Activated CD8-positive, alpha-beta T cell treated with anti-CD3 and anti-CD28 coated beads, Interleukin-2, amount 10 ng/mL, durations not matched to agents 7 days and 5 days (primary cell): ENCODE measurements at regions of chr18 and their contacts with region 1.

Region 1: DNA sequence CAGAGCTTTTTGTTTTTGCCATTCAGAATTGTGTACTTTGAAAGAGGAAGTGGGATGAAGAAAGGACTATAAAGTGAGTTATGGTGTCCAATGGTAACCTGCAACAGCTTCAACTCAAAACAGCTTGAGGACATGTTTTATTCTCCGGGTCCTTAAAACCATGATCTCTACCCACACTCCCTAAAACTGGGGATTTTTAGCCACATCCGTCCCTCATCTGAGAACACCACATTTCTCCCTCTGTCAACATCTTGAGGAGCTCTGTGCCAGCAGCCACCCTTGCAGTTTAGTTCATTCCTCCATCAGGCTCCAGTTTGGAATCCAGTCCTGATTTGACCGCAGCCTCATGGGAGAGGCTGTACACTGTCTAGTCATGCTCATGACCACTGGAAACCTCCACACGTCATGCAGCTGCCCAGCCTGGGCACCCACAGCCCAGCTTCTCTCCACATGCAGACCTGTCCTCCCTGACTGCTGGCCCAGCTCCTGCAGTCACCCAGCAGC is 62.6 kb downstream of the C18orf63 start:
- DNase-seq: peak; percentile 69
- ATAC-seq: peak; percentile 51
- H3K4me3 Mint-ChIP-seq: peak overlapping the region; percentile 54
- H3K27ac Mint-ChIP-seq: peak overlapping the region; percentile 89
- H3K4me1 Mint-ChIP-seq: peaks cover 61% of the 10 kb centered on the region
- H3K27me3 Mint-ChIP-seq: no peaks in the 10 kb centered on the region

Region 2: GRCh38 chr18:74389171-74389927 is 11.1 kb after region 1 on chr18:
- CTCF ChIA-PET with region 1: interaction called, 13 read pairs
- POLR2A ChIA-PET with region 1: interaction called, 5 read pairs
- DNase-seq: no peak
- ATAC-seq: no peak
- H3K4me3 Mint-ChIP-seq: no peak overlapping the region
- H3K27ac Mint-ChIP-seq: no peak overlapping the region
- H3K4me1 Mint-ChIP-seq: peaks cover 21% of the 10 kb centered on the region
- H3K27me3 Mint-ChIP-seq: peaks cover 13% of the 10 kb centered on the region